CD8-positive, alpha-beta T cell (primary cell): ENCODE measurements at regions of chr17 and their contacts with region 1.

Region 1: DNA sequence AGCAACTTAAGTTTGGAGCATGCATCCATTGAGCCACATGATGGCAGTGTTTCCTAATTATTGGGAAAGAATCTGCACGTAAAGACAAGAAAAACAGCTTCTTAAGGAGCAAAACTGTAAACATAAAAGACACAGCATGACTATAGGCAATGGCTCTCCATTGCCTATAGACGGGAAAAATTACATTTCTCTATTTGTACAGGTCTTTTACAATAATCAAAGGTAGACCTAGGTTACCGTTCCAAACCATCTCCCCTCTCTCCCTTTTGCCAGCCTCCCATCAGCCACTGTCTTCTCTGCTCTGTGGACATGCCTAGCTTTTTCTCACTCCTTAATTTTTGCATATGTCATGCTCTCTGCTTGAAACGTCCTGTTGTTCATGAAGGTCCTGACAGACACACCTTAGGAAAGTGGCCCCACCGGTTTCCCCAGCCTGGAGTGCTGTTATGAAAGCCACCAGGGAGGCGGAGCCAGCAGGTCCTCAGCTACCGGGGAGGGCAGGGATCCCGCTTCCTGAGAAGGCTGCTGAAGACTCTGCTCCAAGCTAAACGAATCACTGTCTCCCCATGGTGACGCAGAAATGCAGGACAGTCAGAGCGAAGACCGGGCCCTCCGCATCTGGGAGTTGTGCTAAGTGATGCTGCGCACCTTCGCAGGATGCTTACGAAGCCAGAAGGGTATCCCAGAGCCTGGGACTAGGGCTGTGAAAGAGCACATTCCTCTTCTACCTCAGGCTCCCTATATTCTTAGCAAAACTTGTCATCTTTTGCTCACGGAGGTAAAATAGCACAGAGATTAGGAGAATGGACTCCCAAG is 2.2 kb upstream of the SLC16A11 start:
- DNase-seq: peak in 6 of 9 experiments; percentile 43 to 88 (median 59)
- ATAC-seq: peak; percentile 34
- H3K4me3 ChIP-seq: peak overlapping the region; percentile 42 to 58
- H3K4me3 Mint-ChIP-seq: peak overlapping the region; percentile 79
- H3K27ac ChIP-seq: peak overlapping the region; percentile 47 to 73
- H3K27ac Mint-ChIP-seq: peak overlapping the region; percentile 88
- H3K4me1 ChIP-seq: peaks cover 35% of the 10 kb centered on the region
- H3K4me1 Mint-ChIP-seq: peaks cover 36% of the 10 kb centered on the region
- H3K27me3 ChIP-seq: no peaks in the 10 kb centered on the region
- H3K27me3 Mint-ChIP-seq: no peaks in the 10 kb centered on the region
- CTCF ChIP-seq: peak; percentile 89

Region 2: DNA sequence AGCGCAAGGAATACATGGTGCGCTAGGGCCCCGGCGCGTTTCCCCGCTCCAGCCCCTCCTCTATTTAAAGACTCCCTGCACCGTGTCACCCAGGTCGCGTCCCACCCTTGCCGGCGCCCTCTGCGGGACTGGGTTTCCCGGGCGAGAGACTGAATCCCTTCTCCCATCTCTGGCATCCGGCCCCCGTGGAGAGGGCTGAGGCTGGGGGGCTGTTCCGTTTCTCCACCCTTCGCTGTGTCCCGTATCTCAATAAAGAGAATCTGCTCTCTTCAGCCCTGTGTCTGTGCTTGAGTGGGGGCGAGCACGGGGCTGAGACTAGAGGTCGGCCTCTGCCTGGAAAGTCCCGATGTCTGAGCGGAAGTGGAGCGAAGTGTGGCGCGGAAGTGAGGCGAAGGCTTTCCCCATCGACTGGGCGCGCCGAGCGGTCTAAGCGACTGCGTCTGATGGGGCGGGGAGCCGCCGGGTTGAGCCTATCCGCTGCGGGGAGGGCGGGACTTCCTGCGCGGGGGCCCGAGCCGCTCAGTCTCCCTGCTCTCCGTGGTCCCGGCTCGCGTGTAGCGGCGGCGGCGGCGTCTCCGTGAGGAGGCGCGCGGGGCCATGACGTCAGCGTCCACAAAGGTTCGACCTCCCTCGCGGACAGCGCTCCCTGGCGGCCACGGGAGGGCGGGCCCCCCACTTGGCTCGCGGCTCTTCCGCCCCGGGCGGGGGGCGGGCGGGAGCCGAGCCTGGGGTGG is 31.7 kb before region 1 on chr17:
- CTCF ChIA-PET with region 1: interaction called, 53 read pairs
- POLR2A ChIA-PET with region 1: interaction called, 5 read pairs
- intact Hi-C with region 1: loop called in 1 of 2 experiments (anchors 2 kb)
- DNase-seq: peak; percentile 94 to 100 (median 97)
- ATAC-seq: peak; percentile 79
- H3K4me3 ChIP-seq: peak overlapping the region; percentile 69 to 70
- H3K4me3 Mint-ChIP-seq: peak overlapping the region; percentile 98
- H3K27ac ChIP-seq: peak overlapping the region; percentile 95 to 99
- H3K27ac Mint-ChIP-seq: peak overlapping the region; percentile 100
- H3K4me1 ChIP-seq: peaks cover 63% of the 10 kb centered on the region
- H3K4me1 Mint-ChIP-seq: peaks cover 78% of the 10 kb centered on the region
- H3K27me3 ChIP-seq: no peaks in the 10 kb centered on the region
- H3K27me3 Mint-ChIP-seq: no peaks in the 10 kb centered on the region
- CTCF ChIP-seq: peak; percentile 61

Region 3: GRCh38 chr17:7035591-7036368 is 10.3 kb before region 1 on chr17 and contains the start of gene SLC16A13:
- CTCF ChIA-PET with region 1: interaction called, 10 read pairs
- POLR2A ChIA-PET with region 1: interaction called, 29 read pairs
- intact Hi-C with region 1: loop called in 1 of 2 experiments (anchors 1 kb)
- DNase-seq: peak; percentile 95 to 100 (median 98)
- ATAC-seq: peak; percentile 92
- H3K4me3 ChIP-seq: peak within 1 kb of the TSS; percentile 59 to 94
- H3K4me3 Mint-ChIP-seq: peak within 1 kb of the TSS; percentile 92
- H3K27ac ChIP-seq: peak within 1 kb of the TSS; percentile 85 to 98
- H3K27ac Mint-ChIP-seq: peak within 1 kb of the TSS; percentile 98
- H3K4me1 ChIP-seq: peaks cover 49% of the 10 kb centered on the region
- H3K4me1 Mint-ChIP-seq: peaks cover 50% of the 10 kb centered on the region
- H3K27me3 ChIP-seq: no peaks in the 10 kb centered on the region
- H3K27me3 Mint-ChIP-seq: no peaks in the 10 kb centered on the region
- CTCF ChIP-seq: no peak
- total RNA-seq, gene SLC16A13: 1.8 to 1.9 TPM

Region 4: GRCh38 chr17:7130621-7131422 is 84.7 kb after region 1 on chr17:
- CTCF ChIA-PET with region 1: interaction called, 349 read pairs
- POLR2A ChIA-PET with region 1: interaction called, 22 read pairs
- intact Hi-C with region 1: loop called (anchors 1 kb)
- DNase-seq: no peak
- ATAC-seq: no peak
- H3K4me3 ChIP-seq: no peak overlapping the region
- H3K4me3 Mint-ChIP-seq: no peak overlapping the region
- H3K27ac ChIP-seq: no peak overlapping the region
- H3K27ac Mint-ChIP-seq: peak overlapping the region; percentile 57
- H3K4me1 ChIP-seq: peaks cover 6% of the 10 kb centered on the region
- H3K4me1 Mint-ChIP-seq: peaks cover 23% of the 10 kb centered on the region
- H3K27me3 ChIP-seq: no peaks in the 10 kb centered on the region
- H3K27me3 Mint-ChIP-seq: no peaks in the 10 kb centered on the region
- CTCF ChIP-seq: no peak

Region 5: DNA sequence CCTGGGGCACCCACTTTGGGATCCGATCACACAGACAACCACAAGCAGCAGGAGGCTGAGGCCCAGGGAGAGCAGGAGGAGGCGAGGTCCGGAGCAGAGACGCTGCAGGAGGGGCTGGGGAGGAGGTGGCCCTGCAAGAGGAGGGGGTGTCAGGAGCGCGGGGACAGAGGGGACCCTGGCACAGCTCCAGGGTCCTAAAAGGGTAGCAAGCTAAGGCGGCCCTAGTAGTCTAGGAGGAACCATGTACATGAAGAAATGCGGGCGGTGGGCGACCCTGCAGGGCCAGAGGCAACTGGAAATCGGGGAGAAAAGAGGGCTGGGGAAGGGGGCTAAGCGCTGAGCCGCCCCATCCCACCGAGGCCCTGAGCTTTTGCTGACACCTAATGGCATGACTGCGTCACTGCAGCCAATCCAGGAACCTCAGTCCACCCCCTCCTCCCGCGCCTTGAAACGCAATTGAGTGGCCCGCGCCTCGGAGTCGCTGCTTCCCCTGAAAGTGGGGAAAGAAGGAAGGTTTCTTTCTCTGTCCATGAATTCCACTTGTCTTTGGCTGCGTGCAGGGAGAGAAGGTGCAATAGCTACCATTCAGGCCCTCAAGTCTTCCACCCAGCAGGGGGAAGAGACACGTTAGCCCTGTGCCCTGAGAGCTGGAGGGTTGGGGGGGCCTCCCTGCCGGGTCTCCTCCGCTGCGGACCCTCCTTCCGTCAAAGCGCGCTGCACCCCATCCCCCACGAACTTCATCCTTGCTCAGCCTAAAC is 131.3 kb after region 1 on chr17:
- CTCF ChIA-PET with region 1: interaction called, 35 read pairs
- POLR2A ChIA-PET with region 1: interaction called, 3 read pairs
- intact Hi-C with region 1: loop called (anchors 1 to 2 kb)
- DNase-seq: peak; percentile 38 to 80 (median 64)
- ATAC-seq: peak; percentile 91
- H3K4me3 ChIP-seq: peak overlapping the region; percentile 24 to 36
- H3K4me3 Mint-ChIP-seq: peak overlapping the region; percentile 76
- H3K27ac ChIP-seq: no peak overlapping the region
- H3K27ac Mint-ChIP-seq: no peak overlapping the region
- H3K4me1 ChIP-seq: peaks cover 26% of the 10 kb centered on the region
- H3K4me1 Mint-ChIP-seq: no peaks in the 10 kb centered on the region
- H3K27me3 ChIP-seq: peaks cover 0 to 44% of the 10 kb centered on the region in 2 experiments
- H3K27me3 Mint-ChIP-seq: no peaks in the 10 kb centered on the region
- CTCF ChIP-seq: peak; percentile 72

Region 6: GRCh38 chr17:7280519-7281429 is 234.7 kb after region 1 on chr17:
- CTCF ChIA-PET with region 1: interaction called, 3 read pairs
- POLR2A ChIA-PET with region 1: no interaction called
- intact Hi-C with region 1: loop called (anchors 5 kb)
- DNase-seq: peak; percentile 76 to 92 (median 86)
- ATAC-seq: peak; percentile 88
- H3K4me3 ChIP-seq: peak overlapping the region; percentile 41 to 46
- H3K4me3 Mint-ChIP-seq: peak overlapping the region; percentile 73
- H3K27ac ChIP-seq: no peak overlapping the region
- H3K27ac Mint-ChIP-seq: no peak overlapping the region
- H3K4me1 ChIP-seq: peaks cover 25% of the 10 kb centered on the region
- H3K4me1 Mint-ChIP-seq: peaks cover 16% of the 10 kb centered on the region
- H3K27me3 ChIP-seq: peaks cover 0 to 26% of the 10 kb centered on the region in 2 experiments
- H3K27me3 Mint-ChIP-seq: peaks cover 9% of the 10 kb centered on the region
- CTCF ChIP-seq: peak; percentile 84

Region 7: GRCh38 chr17:7394452-7395191 is 348.5 kb after region 1 on chr17 and contains the start of gene PLSCR3:
- CTCF ChIA-PET with region 1: no interaction called
- POLR2A ChIA-PET with region 1: no interaction called
- intact Hi-C with region 1: no loop called
- DNase-seq: peak; percentile 65 to 92 (median 80)
- ATAC-seq: peak; percentile 88
- H3K4me3 ChIP-seq: peak within 1 kb of the TSS; percentile 81 to 84
- H3K4me3 Mint-ChIP-seq: peak within 1 kb of the TSS; percentile 92
- H3K27ac ChIP-seq: peak within 1 kb of the TSS; percentile 68 to 72
- H3K27ac Mint-ChIP-seq: peak within 1 kb of the TSS; percentile 92
- H3K4me1 ChIP-seq: peaks cover 33% of the 10 kb centered on the region
- H3K4me1 Mint-ChIP-seq: peaks cover 26% of the 10 kb centered on the region
- H3K27me3 ChIP-seq: no peaks in the 10 kb centered on the region
- H3K27me3 Mint-ChIP-seq: no peaks in the 10 kb centered on the region
- CTCF ChIP-seq: no peak
- total RNA-seq, gene PLSCR3: 38.1 TPM

Region 8: GRCh38 chr17:7583253-7584109 is 537.4 kb after region 1 on chr17 and contains the start of gene MPDU1:
- CTCF ChIA-PET with region 1: no interaction called
- POLR2A ChIA-PET with region 1: no interaction called
- intact Hi-C with region 1: loop called in 1 of 2 experiments (anchors 10 kb)
- DNase-seq: peak; percentile 85 to 98 (median 94)
- ATAC-seq: peak; percentile 83
- H3K4me3 ChIP-seq: peak within 1 kb of the TSS; percentile 90 to 93
- H3K4me3 Mint-ChIP-seq: peak within 1 kb of the TSS; percentile 100
- H3K27ac ChIP-seq: peak within 1 kb of the TSS; percentile 92 to 99
- H3K27ac Mint-ChIP-seq: peak within 1 kb of the TSS; percentile 100
- H3K4me1 ChIP-seq: peaks cover 40% of the 10 kb centered on the region
- H3K4me1 Mint-ChIP-seq: peaks cover 47% of the 10 kb centered on the region
- H3K27me3 ChIP-seq: no peaks in the 10 kb centered on the region
- H3K27me3 Mint-ChIP-seq: no peaks in the 10 kb centered on the region
- CTCF ChIP-seq: no peak
- total RNA-seq, gene MPDU1: 16.6 to 17.2 TPM